PC-9 (cell line): ENCODE measurements at regions of chrX and their contacts with region 1.

Region 1: DNA sequence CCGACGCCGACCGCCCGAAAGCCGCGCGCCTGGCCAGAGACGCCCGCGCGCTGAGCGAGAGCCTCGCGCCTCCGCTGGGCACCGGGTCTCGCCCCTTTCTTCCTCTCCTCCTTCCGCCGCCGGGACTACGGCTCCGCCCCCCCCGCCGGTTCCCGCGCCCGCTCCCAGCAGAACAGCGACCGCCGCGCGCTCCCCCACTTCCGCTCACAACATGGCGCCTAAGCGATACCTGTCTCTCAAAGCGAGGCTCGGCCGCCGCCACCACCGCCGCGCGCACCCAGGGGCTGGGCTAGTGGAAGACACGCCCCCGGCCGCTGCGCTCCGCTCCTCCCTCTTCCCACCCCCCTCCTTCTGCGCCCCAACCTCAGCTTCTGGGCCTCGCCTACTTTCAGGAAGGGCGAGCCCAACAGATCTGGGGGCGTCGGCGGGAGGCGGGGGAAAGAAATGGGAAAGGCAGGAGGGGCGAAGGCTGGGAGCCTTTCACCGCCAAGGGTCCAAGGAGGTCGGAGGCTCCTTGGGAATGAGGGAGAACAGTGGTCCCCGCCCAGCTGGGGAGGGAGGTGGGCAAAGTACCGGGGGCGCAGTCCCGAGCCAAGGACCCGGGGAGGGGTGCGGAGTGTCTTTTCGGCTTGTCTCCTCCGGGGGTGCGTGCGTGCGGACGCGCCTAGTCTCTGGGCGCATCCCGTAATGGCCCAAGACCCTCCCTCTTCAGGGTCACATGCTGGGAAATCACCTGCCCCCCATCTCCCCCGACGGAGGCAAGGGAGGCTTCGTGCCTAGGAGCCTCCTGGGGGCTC is at the start of gene RPS6KA3:
- DNase-seq: peak; percentile 68 to 89
- H3K4me3 ChIP-seq: peak within 1 kb of the TSS; percentile 61
- H3K27ac ChIP-seq: peak within 1 kb of the TSS; percentile 69
- H3K4me1 ChIP-seq: peaks cover 37% of the 10 kb centered on the region
- H3K27me3 ChIP-seq: no peaks in the 10 kb centered on the region
- CTCF ChIP-seq: no peak
- total RNA-seq, gene RPS6KA3: 45.3 and 51.4 TPM in 2 replicates

Region 2: GRCh38 chrX:20042221-20042620 is 224.8 kb before region 1 on chrX:
- CTCF ChIA-PET with region 1: no interaction called
- POLR2A ChIA-PET with region 1: no interaction called
- intact Hi-C with region 1: no loop called
- DNase-seq: no peak
- H3K4me3 ChIP-seq: no peak overlapping the region
- H3K27ac ChIP-seq: no peak overlapping the region
- H3K4me1 ChIP-seq: no peaks in the 10 kb centered on the region
- H3K27me3 ChIP-seq: no peaks in the 10 kb centered on the region
- CTCF ChIP-seq: no peak

Region 3: GRCh38 chrX:20128670-20129069 is 138.3 kb before region 1 on chrX:
- CTCF ChIA-PET with region 1: no interaction called
- POLR2A ChIA-PET with region 1: no interaction called
- intact Hi-C with region 1: no loop called
- DNase-seq: no peak
- H3K4me3 ChIP-seq: no peak overlapping the region
- H3K27ac ChIP-seq: no peak overlapping the region
- H3K4me1 ChIP-seq: no peaks in the 10 kb centered on the region
- H3K27me3 ChIP-seq: no peaks in the 10 kb centered on the region
- CTCF ChIP-seq: no peak

Region 4: GRCh38 chrX:20141281-20142220 is 125.5 kb before region 1 on chrX and contains the start of gene EIF1AX:
- CTCF ChIA-PET with region 1: no interaction called
- POLR2A ChIA-PET with region 1: no interaction called
- intact Hi-C with region 1: loop called (anchors 5 kb)
- DNase-seq: peak; percentile 90 to 96
- H3K4me3 ChIP-seq: peak within 1 kb of the TSS; percentile 95
- H3K27ac ChIP-seq: peak within 1 kb of the TSS; percentile 61
- H3K4me1 ChIP-seq: peaks cover 13% of the 10 kb centered on the region
- H3K27me3 ChIP-seq: no peaks in the 10 kb centered on the region
- CTCF ChIP-seq: no peak
- total RNA-seq, gene EIF1AX: 77.3 TPM in 2 replicates

Region 5: GRCh38 chrX:20362268-20363267 is 95.6 kb after region 1 on chrX:
- CTCF ChIA-PET with region 1: no interaction called
- POLR2A ChIA-PET with region 1: no interaction called
- intact Hi-C with region 1: loop called (anchors 1 kb)
- DNase-seq: peak; percentile 30 to 94
- H3K4me3 ChIP-seq: peak overlapping the region; percentile 51
- H3K27ac ChIP-seq: peak overlapping the region; percentile 99
- H3K4me1 ChIP-seq: peaks cover 50% of the 10 kb centered on the region
- H3K27me3 ChIP-seq: no peaks in the 10 kb centered on the region
- CTCF ChIP-seq: no peak

Region 6: GRCh38 chrX:20442597-20442996 is 175.6 kb after region 1 on chrX:
- CTCF ChIA-PET with region 1: no interaction called
- POLR2A ChIA-PET with region 1: no interaction called
- intact Hi-C with region 1: loop called (anchors 1 kb)
- DNase-seq: peak; percentile 60 to 74
- H3K4me3 ChIP-seq: no peak overlapping the region
- H3K27ac ChIP-seq: no peak overlapping the region
- H3K4me1 ChIP-seq: peaks cover 7% of the 10 kb centered on the region; the same call in 1 of the 2 replicates
- H3K27me3 ChIP-seq: no peaks in the 10 kb centered on the region
- CTCF ChIP-seq: peak; percentile 79